Dendritic cell treated with granulocyte-macrophage colony-stimulating factor and Interleukin-4, amounts not matched to agents 40 ng/mL and 50 ng/mL, for 4 days (primary cell): ENCODE measurements at regions of chr6 and their contacts with region 1.

Region 1: GRCh38 chr6:6676910-6677441 is 88.5 kb downstream of the LY86 start:
- H3K4me3 Mint-ChIP-seq: no peak overlapping the region
- H3K27ac Mint-ChIP-seq: peak overlapping the region; percentile 67
- H3K4me1 Mint-ChIP-seq: peaks cover 45% of the 10 kb centered on the region
- H3K27me3 Mint-ChIP-seq: no peaks in the 10 kb centered on the region

Region 2: GRCh38 chr6:6712258-6712999 is 35.5 kb after region 1 on chr6:
- intact Hi-C with region 1: no loop called
- H3K4me3 Mint-ChIP-seq: peak overlapping the region; percentile 39
- H3K27ac Mint-ChIP-seq: peak overlapping the region; percentile 72
- H3K4me1 Mint-ChIP-seq: peaks cover 90% of the 10 kb centered on the region
- H3K27me3 Mint-ChIP-seq: no peaks in the 10 kb centered on the region

Region 3: DNA sequence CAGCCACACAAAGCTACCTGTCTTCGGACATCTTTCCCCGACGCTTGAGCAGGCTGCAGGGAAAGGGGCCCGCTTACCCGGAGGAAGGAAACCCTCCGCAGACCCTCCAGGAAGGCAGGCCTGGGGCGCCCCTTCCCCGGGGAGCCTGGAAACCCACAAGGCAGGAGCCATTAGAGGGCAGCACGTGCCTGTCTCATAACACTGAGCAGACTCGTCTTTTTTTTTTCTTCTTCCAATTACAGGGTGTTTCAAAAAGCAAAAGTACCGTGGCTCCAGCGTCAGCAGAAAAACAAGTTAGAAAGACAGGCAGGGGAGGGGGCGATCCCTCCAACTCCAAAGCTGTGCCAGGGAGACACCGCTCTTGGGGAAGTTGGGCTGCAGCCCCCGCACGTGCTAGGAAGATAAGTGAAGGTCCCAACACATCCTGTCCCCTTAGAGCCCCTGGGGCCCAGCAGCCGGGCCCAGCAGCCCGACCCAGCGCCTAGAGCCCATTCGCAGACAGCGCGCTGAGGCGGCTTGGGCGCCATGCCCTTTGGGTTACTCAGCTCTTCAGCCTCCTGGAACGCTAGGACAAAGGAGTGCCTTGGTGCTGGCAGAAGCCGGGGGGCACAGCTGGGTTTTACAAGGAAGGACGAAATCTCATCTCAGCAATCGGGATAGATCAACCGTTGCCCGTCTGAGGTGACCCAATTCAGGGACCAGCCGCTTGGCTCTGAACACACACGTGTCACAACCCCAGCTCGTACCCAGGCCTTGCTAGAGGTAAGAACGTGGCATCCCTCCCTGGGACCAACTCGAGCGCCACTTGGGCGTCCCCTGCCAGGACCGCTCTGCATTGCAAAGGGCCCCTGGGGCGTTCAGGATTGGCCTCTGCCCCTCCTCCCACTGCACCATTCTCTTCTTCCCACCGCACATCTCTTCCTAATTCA is 47.8 kb after region 1 on chr6:
- intact Hi-C with region 1: loop called (anchors 10 kb)
- H3K4me3 Mint-ChIP-seq: peak overlapping the region; percentile 61
- H3K27ac Mint-ChIP-seq: peak overlapping the region; percentile 94
- H3K4me1 Mint-ChIP-seq: peaks cover 94% of the 10 kb centered on the region
- H3K27me3 Mint-ChIP-seq: no peaks in the 10 kb centered on the region

Region 4: DNA sequence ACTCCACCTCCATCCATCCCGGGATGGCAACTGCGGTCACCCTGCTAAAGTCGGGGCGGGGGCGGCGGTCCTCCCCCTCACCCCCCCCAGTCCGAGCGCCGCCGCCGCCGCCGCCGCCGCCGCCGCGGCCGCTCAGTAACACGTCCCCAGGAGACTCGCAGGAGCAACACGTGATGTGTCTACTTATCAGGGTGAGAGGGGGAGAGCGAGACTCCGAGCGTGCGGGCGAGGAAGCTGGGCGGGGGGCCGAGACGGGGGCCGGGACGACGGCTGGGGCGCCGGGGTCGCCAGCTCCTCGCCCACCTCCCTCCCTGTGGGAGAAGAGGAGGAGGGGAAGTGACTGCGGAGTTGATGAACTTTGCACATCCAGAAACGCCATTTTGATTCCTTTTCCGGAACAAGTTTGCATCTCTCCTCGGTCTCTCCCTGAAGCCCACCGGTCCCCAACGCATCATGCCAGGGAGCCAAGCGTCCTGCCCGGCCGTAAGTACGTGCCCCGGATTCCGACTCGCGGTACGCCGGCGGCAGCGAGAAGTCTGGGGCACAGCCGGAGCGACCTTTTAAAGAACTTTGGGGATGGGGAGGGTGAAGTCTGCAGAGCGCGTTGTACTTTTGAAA is 430.7 kb after region 1 on chr6 and contains the start of gene RREB1:
- intact Hi-C with region 1: loop called (anchors 10 kb)
- H3K4me3 Mint-ChIP-seq: peak within 1 kb of the TSS; percentile 98
- H3K27ac Mint-ChIP-seq: peak within 1 kb of the TSS; percentile 99
- H3K4me1 Mint-ChIP-seq: peaks cover 36% of the 10 kb centered on the region
- H3K27me3 Mint-ChIP-seq: no peaks in the 10 kb centered on the region